ENCODE measurements at regions of chr20 and their contacts with region 1.

Region 1: DNA sequence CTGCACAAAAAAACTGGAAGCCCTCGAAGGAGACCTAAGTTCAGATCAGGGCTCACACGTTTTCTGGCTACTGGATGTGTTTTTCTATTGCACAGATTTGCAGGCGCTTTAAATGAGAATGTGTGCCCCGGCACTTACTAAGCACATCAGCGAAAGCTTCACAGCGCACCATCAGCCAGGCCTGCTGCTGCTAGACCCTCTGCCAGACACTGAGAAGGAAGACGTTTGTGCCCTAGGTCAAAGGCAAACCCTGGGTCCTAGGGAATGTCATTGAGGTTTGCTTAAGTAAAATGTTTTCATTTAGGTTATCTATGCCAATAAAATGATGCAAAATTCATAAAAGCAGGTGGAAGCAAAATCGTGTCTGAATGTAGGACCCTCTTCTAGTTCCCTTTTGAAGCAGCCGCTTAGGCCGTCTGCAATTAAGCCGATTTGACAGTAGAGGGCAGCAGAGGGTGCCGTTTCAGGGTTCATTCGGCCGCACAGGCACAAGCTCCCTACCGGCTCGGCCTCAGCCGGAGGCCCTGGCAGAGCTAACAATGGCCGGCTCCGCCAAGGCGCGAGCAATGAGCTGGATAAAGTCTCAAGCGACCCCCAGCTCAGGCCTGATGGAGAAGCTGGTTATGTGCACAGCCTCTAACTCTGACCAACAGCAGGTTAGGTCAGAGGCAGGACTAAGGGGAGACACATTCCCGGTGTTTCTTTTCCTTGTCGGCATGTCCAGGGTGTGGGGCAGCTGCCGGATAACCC is 107.2 kb upstream of the FOXA2 start:
- DNase-seq: no peak
- H3K4me3 ChIP-seq: no peak overlapping the region
- H3K27me3 ChIP-seq: no peaks in the 10 kb centered on the region
- CTCF ChIP-seq: peak; percentile 85

Region 2: GRCh38 chr20:22716821-22717351 is 25.3 kb after region 1 on chr20:
- CTCF ChIA-PET with region 1: interaction called, 12 read pairs
- POLR2A ChIA-PET with region 1: no interaction called
- DNase-seq: no peak
- H3K4me3 ChIP-seq: no peak overlapping the region
- H3K27me3 ChIP-seq: no peaks in the 10 kb centered on the region
- CTCF ChIP-seq: no peak

Region 3: GRCh38 chr20:22974353-22974752 is 282.8 kb after region 1 on chr20:
- CTCF ChIA-PET with region 1: interaction called, 73 read pairs
- POLR2A ChIA-PET with region 1: interaction called, 5 read pairs
- DNase-seq: no peak
- H3K4me3 ChIP-seq: no peak overlapping the region
- H3K27me3 ChIP-seq: no peaks in the 10 kb centered on the region
- CTCF ChIP-seq: peak; percentile 54

Region 4: GRCh38 chr20:23235173-23236027 is 543.9 kb after region 1 on chr20:
- CTCF ChIA-PET with region 1: interaction called, 34 read pairs
- POLR2A ChIA-PET with region 1: no interaction called
- DNase-seq: no peak
- H3K4me3 ChIP-seq: no peak overlapping the region
- H3K27me3 ChIP-seq: no peaks in the 10 kb centered on the region
- CTCF ChIP-seq: peak; percentile 75

Region 5: DNA sequence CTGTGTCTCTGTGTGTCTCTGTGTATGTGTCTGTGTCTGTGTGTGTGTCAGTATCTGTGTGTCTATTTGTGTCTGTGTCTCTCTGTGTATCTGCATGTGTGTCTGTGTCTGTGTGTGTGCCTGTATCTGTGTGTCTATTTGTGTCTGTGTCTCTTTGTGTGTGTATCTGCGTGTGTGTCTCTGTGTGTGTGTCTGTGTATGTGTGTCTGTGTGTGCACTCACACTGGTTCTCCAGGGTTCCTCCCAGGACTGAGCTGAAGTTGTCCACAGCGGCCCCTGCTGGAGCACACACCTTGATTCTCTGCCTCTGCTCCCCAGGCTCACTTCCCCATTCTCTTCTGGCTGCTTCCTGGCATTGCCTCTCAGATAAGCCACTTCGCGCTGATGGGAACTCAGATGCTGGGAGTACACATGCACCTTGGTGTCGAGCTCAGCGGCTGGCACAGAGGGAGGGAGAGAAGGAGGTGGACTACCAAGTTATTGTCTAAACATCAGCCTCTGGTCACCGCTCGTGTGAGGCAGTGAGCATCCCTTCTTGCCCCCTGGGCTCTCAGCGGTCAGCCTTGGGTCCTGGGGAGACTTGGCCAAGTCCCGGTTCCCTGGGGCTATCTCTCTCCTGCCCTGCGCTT is 554.1 kb after region 1 on chr20:
- CTCF ChIA-PET with region 1: interaction called, 16 read pairs
- POLR2A ChIA-PET with region 1: no interaction called
- DNase-seq: no peak
- H3K4me3 ChIP-seq: no peak overlapping the region
- H3K27me3 ChIP-seq: peaks cover 1% of the 10 kb centered on the region; the same call in 1 of the 2 replicates
- CTCF ChIP-seq: peak; percentile 44

Region 6: GRCh38 chr20:23340524-23340923 is 649.0 kb after region 1 on chr20:
- CTCF ChIA-PET with region 1: interaction called, 91 read pairs
- POLR2A ChIA-PET with region 1: no interaction called
- DNase-seq: no peak
- H3K4me3 ChIP-seq: no peak overlapping the region
- H3K27me3 ChIP-seq: peaks cover 2% of the 10 kb centered on the region; the same call in 1 of the 2 replicates
- CTCF ChIP-seq: peak; percentile 57

Measured in BJ (cell line).